Gastrocnemius medialis (tissue), 4 donors: ENCODE measurements at regions of chr9 and their contacts with region 1.

Region 1: GRCh38 chr9:75071530-75072124 is 16.3 kb downstream of the NMRK1 start:
- DNase-seq: no peak
- ATAC-seq: no peak
- H3K4me3 ChIP-seq: no peak overlapping the region
- H3K27ac ChIP-seq: no peak overlapping the region
- H3K4me1 ChIP-seq: no peaks in the 10 kb centered on the region
- H3K27me3 ChIP-seq: no peaks in the 10 kb centered on the region
- CTCF ChIP-seq: no peak
- POLR2A ChIP-seq: no peak

Region 2: GRCh38 chr9:74773886-74774479 is 297.6 kb before region 1 on chr9:
- in situ Hi-C with region 1: loop called (anchors 5 kb)
- intact Hi-C with region 1: no loop called
- DNase-seq: peak; percentile 22 to 51
- ATAC-seq: peak in 1 of 2 donors; percentile 80
- H3K4me3 ChIP-seq: no peak overlapping the region
- H3K27ac ChIP-seq: no peak overlapping the region
- H3K4me1 ChIP-seq: no peaks in the 10 kb centered on the region
- H3K27me3 ChIP-seq: peaks cover 0 to 8% (median 0%) of the 10 kb centered on the region in 3 donors
- CTCF ChIP-seq: peak; percentile 47 to 89 (median 73)
- POLR2A ChIP-seq: no peak

Region 3: GRCh38 chr9:75001719-75002422 is 69.8 kb before region 1 on chr9:
- in situ Hi-C with region 1: no loop called
- intact Hi-C with region 1: loop called (anchors 2 kb)
- DNase-seq: no peak
- ATAC-seq: peak; percentile 68 to 86
- H3K4me3 ChIP-seq: no peak overlapping the region
- H3K27ac ChIP-seq: no peak overlapping the region
- H3K4me1 ChIP-seq: no peaks in the 10 kb centered on the region
- H3K27me3 ChIP-seq: no peaks in the 10 kb centered on the region
- CTCF ChIP-seq: peak; percentile 66 to 79 (median 73)
- POLR2A ChIP-seq: no peak

Region 4: DNA sequence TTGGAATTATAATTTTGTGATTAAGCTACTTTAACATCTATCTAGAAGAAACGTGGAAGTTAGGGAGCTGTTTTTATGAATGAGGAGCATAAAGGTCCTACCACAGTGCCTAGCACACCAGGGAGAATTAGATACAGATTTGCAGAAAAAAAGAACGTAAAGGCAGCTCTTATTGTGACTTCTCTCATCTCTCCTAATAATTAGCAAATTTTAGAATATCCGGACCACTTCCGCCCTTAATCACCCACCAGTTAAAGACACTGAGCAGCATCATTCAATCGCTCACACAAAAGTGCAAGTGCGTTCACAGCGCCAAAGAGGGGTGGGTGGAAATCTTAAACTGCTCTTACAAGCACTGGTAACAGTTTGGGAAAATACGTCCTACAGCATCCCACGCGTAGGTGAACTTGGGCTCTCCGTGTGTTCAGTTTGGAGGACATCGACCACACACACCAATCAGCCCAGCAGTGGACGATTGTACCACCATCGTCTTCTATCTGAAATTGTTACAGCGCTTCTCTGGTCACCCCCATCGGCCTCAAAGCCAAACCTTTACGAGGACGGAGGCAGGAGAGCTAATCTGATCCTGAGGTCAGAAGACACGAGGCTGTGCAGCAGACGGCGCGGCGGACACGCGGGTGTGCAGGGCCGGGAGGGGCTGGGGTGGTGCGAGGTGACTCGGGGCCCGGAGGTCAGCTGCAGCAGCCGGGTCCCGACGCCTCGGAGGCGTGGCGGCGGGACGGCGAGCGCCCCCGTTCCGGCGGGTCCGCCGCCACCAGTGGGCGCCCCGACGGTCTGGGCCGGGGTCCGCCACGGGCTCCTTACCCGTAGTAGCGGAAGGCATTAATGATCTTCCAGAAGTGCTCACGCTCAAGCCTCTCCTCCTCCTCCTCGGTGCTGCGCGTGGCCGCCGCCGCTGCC is 44.2 kb before region 1 on chr9:
- in situ Hi-C with region 1: loop called in 1 of 4 experiments (anchors 10 kb)
- intact Hi-C with region 1: loop called (anchors 2 kb)
- DNase-seq: peak; percentile 49 to 70
- ATAC-seq: peak; percentile 71 to 74
- H3K4me3 ChIP-seq: peak overlapping the region; percentile 63 to 94 (median 64)
- H3K27ac ChIP-seq: peak overlapping the region; percentile 78 to 96 (median 84)
- H3K4me1 ChIP-seq: peaks cover 23 to 26% of the 10 kb centered on the region in 2 donors
- H3K27me3 ChIP-seq: no peaks in the 10 kb centered on the region
- CTCF ChIP-seq: peak in 2 of 5 experiments; percentile 17 to 47
- POLR2A ChIP-seq: no peak